Gastrocnemius medialis (tissue), 4 donors: ENCODE measurements at regions of chr7 and their contacts with region 1.

Region 1: DNA sequence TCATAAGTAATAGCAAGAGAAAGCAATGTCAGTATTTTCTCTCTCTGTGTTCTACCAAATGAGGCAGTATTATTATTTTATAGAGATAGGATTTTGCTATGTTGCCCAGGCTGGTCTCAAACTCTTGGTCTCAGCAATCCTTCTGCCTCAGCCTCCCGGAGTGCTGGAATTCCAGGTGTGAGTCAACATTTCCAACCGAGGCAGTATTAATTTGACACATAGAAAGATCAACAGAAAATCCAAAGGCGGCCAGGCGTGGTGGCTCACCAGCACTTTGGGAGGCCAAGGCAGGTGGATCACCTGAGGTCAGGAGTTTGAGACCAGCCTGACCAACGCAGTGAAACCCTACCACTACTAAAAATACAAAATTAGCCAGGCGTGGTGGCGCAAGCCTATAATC is 71.8 kb downstream of the SMURF1 start:
- DNase-seq: no peak
- ATAC-seq: no peak
- H3K4me3 ChIP-seq: no peak overlapping the region
- H3K27ac ChIP-seq: peak overlapping the region in 3 of 4 donors; percentile 54 to 85 (median 82)
- H3K4me1 ChIP-seq: peaks cover 45 to 56% of the 10 kb centered on the region in 2 donors
- H3K27me3 ChIP-seq: no peaks in the 10 kb centered on the region
- CTCF ChIP-seq: no peak
- POLR2A ChIP-seq: no peak

Region 2: DNA sequence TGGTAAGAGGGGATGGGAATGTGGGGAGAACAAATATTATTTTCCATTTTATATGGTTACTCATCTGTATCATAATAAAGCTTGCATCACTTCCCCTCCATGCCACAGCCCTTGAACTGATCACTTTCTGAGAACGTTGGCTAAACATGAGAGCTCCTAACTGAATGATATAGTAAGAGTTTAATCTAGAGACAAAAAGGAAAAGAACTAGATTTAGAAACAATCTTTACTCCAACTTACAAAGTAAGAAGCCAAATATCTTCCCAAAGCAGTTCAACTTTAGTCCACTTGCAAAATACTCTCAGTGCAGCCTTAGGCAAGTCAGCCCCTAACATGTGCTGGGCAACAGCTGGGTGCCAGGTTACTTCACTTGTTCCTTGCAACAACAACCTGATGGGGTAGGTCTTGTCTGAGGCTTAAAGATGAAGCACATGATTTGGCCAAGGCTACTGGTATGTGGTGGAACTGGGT is 51.5 kb after region 1 on chr7:
- in situ Hi-C with region 1: no loop called
- intact Hi-C with region 1: loop called (anchors 1 kb)
- DNase-seq: peak; percentile 34 to 67
- ATAC-seq: peak; percentile 73 to 95
- H3K4me3 ChIP-seq: no peak overlapping the region
- H3K27ac ChIP-seq: peak overlapping the region; percentile 56 to 83 (median 64)
- H3K4me1 ChIP-seq: peaks cover 61 to 70% of the 10 kb centered on the region in 2 donors
- H3K27me3 ChIP-seq: no peaks in the 10 kb centered on the region
- CTCF ChIP-seq: no peak
- POLR2A ChIP-seq: no peak

Region 3: GRCh38 chr7:99248391-99249095 is 176.4 kb after region 1 on chr7:
- in situ Hi-C with region 1: no loop called
- intact Hi-C with region 1: no loop called
- DNase-seq: no peak
- ATAC-seq: no peak
- H3K4me3 ChIP-seq: no peak overlapping the region
- H3K27ac ChIP-seq: no peak overlapping the region
- H3K4me1 ChIP-seq: no peaks in the 10 kb centered on the region
- H3K27me3 ChIP-seq: peaks cover 0 to 6% (median 0%) of the 10 kb centered on the region in 3 donors
- CTCF ChIP-seq: no peak
- POLR2A ChIP-seq: no peak